CD8-positive, alpha-beta T cell (primary cell): ENCODE measurements at regions of chr5 and their contacts with region 1.

Region 1: DNA sequence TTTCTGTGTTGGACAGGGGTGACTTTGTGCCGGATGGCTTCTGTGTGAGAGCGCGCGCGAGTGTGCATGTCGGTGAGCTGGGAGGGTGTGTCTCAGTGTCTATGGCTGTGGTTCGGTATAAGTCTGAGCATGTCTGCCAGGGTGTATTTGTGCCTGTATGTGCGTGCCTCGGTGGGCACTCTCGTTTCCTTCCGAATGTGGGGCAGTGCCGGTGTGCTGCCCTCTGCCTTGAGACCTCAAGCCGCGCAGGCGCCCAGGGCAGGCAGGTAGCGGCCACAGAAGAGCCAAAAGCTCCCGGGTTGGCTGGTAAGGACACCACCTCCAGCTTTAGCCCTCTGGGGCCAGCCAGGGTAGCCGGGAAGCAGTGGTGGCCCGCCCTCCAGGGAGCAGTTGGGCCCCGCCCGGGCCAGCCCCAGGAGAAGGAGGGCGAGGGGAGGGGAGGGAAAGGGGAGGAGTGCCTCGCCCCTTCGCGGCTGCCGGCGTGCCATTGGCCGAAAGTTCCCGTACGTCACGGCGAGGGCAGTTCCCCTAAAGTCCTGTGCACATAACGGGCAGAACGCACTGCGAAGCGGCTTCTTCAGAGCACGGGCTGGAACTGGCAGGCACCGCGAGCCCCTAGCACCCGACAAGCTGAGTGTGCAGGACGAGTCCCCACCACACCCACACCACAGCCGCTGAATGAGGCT is at the start of gene ADRB2:
- DNase-seq: peak; percentile 78 to 96 (median 86)
- ATAC-seq: peak; percentile 88
- H3K4me3 ChIP-seq: peak within 1 kb of the TSS; percentile 62 to 73
- H3K4me3 Mint-ChIP-seq: peak within 1 kb of the TSS; percentile 89
- H3K27ac ChIP-seq: peak within 1 kb of the TSS; percentile 57 to 75
- H3K27ac Mint-ChIP-seq: peak within 1 kb of the TSS; percentile 87
- H3K4me1 ChIP-seq: peaks cover 11% of the 10 kb centered on the region
- H3K4me1 Mint-ChIP-seq: peaks cover 53% of the 10 kb centered on the region
- H3K27me3 ChIP-seq: no peaks in the 10 kb centered on the region
- H3K27me3 Mint-ChIP-seq: no peaks in the 10 kb centered on the region
- CTCF ChIP-seq: no peak
- total RNA-seq, gene ADRB2: 7.6 to 8.8 TPM

Region 2: DNA sequence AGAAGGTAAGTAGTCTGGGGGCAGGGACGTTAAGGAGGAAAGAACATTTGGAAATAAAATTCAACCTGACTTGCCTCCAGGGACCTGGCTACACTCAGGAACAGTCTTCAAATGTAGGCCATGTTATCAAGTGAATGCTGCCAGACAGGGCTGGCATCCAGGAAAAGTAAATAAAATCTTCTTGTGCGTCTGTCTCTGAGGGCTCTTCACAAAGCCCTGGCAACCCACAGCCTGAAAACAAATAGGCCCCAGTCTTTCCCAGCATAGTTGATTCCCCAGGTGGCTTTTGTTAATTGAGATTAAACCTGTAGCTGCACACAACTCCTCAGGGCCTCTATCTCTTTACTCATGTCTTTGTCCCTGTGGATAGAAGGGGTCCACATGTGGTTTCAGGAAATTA is 1535.9 kb before region 1 on chr5:
- CTCF ChIA-PET with region 1: no interaction called
- POLR2A ChIA-PET with region 1: no interaction called
- intact Hi-C with region 1: no loop called
- DNase-seq: no peak
- ATAC-seq: no peak
- H3K4me3 ChIP-seq: no peak overlapping the region
- H3K4me3 Mint-ChIP-seq: no peak overlapping the region
- H3K27ac ChIP-seq: no peak overlapping the region
- H3K27ac Mint-ChIP-seq: no peak overlapping the region
- H3K4me1 ChIP-seq: no peaks in the 10 kb centered on the region
- H3K4me1 Mint-ChIP-seq: no peaks in the 10 kb centered on the region
- H3K27me3 ChIP-seq: no peaks in the 10 kb centered on the region
- H3K27me3 Mint-ChIP-seq: no peaks in the 10 kb centered on the region
- CTCF ChIP-seq: no peak

Region 3: GRCh38 chr5:148653836-148654781 is 172.1 kb before region 1 on chr5 and contains the start of gene HTR4:
- CTCF ChIA-PET with region 1: no interaction called
- POLR2A ChIA-PET with region 1: no interaction called
- intact Hi-C with region 1: no loop called
- DNase-seq: no peak
- ATAC-seq: no peak
- H3K4me3 ChIP-seq: no peak within 1 kb of the TSS
- H3K4me3 Mint-ChIP-seq: no peak within 1 kb of the TSS
- H3K27ac ChIP-seq: no peak within 1 kb of the TSS
- H3K27ac Mint-ChIP-seq: no peak within 1 kb of the TSS
- H3K4me1 ChIP-seq: no peaks in the 10 kb centered on the region
- H3K4me1 Mint-ChIP-seq: peaks cover 3% of the 10 kb centered on the region
- H3K27me3 ChIP-seq: peaks cover 0 to 5% of the 10 kb centered on the region in 2 experiments
- H3K27me3 Mint-ChIP-seq: peaks cover 50% of the 10 kb centered on the region
- CTCF ChIP-seq: no peak
- total RNA-seq, gene HTR4: not detected

Region 4: DNA sequence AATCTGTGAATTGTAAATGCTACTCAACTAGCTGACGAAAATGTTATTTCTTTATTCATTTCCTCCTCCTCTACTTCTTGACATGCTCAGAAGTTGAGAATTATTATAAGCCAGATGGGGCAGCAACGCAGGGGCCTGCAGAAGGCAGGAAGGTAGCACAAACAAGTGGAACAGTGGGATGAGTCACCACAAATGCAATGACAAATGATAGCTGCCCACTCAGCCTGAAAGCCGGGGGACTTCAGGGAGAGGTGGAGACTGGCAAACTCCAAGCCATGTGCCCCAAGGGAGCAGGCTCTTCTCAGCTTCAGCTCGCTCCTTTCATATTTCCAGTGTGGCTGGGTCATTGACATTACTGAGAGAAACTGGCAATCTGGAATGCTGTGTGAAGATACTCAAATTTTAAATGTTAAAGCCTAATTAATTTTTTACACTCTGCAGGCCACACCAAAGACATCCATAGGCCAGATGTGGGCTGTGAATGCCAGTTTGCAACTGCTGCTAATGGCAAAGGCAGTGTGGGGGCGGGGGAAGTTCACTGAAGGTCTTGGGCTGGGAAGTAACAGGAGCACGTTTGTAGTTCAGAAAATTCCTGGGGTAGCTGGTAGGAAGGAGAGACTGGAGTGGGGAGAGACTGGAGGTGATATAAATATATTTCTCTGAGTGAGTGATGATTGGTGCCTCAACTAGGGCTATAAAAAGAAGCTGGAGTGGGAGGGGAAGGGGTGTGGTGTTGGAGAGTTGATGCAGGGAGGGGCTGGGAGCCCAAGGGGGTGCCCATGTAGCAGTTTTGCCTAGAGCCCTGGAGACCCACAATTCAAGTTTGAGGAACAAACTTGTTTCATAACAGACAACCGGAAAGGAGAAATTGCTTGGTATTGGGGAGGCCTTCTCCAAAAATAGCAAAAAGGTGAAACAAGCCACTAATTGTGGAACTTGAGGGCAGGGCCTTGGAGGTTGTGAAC is 20.6 kb before region 1 on chr5:
- CTCF ChIA-PET with region 1: interaction called, 22 read pairs
- POLR2A ChIA-PET with region 1: interaction called, 5 read pairs
- intact Hi-C with region 1: loop called in 1 of 2 experiments (anchors 1 kb)
- DNase-seq: no peak
- ATAC-seq: no peak
- H3K4me3 ChIP-seq: no peak overlapping the region
- H3K4me3 Mint-ChIP-seq: no peak overlapping the region
- H3K27ac ChIP-seq: no peak overlapping the region
- H3K27ac Mint-ChIP-seq: no peak overlapping the region
- H3K4me1 ChIP-seq: peaks cover 16% of the 10 kb centered on the region
- H3K4me1 Mint-ChIP-seq: peaks cover 25% of the 10 kb centered on the region
- H3K27me3 ChIP-seq: no peaks in the 10 kb centered on the region
- H3K27me3 Mint-ChIP-seq: peaks cover 2% of the 10 kb centered on the region
- CTCF ChIP-seq: no peak

Region 5: GRCh38 chr5:148849461-148849860 is 23.3 kb after region 1 on chr5:
- CTCF ChIA-PET with region 1: interaction called, 13 read pairs
- POLR2A ChIA-PET with region 1: interaction called, 8 read pairs
- intact Hi-C with region 1: loop called in 1 of 2 experiments (anchors 2 kb)
- DNase-seq: peak in 6 of 9 experiments; percentile 13 to 86 (median 64)
- ATAC-seq: peak; percentile 58
- H3K4me3 ChIP-seq: peak overlapping the region in 1 of 2 experiments; percentile 11
- H3K4me3 Mint-ChIP-seq: peak overlapping the region; percentile 5
- H3K27ac ChIP-seq: peak overlapping the region; percentile 42 to 91
- H3K27ac Mint-ChIP-seq: peak overlapping the region; percentile 89
- H3K4me1 ChIP-seq: peaks cover 52% of the 10 kb centered on the region
- H3K4me1 Mint-ChIP-seq: peaks cover 71% of the 10 kb centered on the region
- H3K27me3 ChIP-seq: no peaks in the 10 kb centered on the region
- H3K27me3 Mint-ChIP-seq: no peaks in the 10 kb centered on the region
- CTCF ChIP-seq: no peak